ENCODE measurements at regions of chr15 and their contacts with region 1.

Region 1: GRCh38 chr15:96330450-96331145 is at the start of gene NR2F2:
- DNase-seq: peak; percentile 53
- ATAC-seq: peak; percentile 70
- H3K4me3 ChIP-seq: peak within 1 kb of the TSS; percentile 78
- H3K27ac ChIP-seq: no peak within 1 kb of the TSS
- H3K4me1 ChIP-seq: peaks cover 6% of the 10 kb centered on the region; the same call in 1 of the 2 replicates
- H3K27me3 ChIP-seq: peaks cover 0 to 14% of the 10 kb centered on the region in 2 experiments; a peak in 1 of 4 replicates
- CTCF ChIP-seq: no peak
- EP300 ChIP-seq: no peak
- POLR2A ChIP-seq: no peak
- RAD21 ChIP-seq: no peak
- polyA plus RNA-seq, gene NR2F2: 2.3 to 3.2 TPM

Region 2: GRCh38 chr15:95259513-95259912 is 1071.1 kb before region 1 on chr15:
- CTCF ChIA-PET with region 1: interaction called, 34 read pairs
- POLR2A ChIA-PET with region 1: no interaction called
- RAD21 ChIA-PET with region 1: interaction called, 19 read pairs
- SMC1A ChIA-PET with region 1: interaction called, 22 read pairs
- in situ Hi-C with region 1: no loop called
- intact Hi-C with region 1: no loop called
- DNase-seq: peak; percentile 47
- ATAC-seq: peak; percentile 95
- H3K4me3 ChIP-seq: no peak overlapping the region
- H3K27ac ChIP-seq: no peak overlapping the region
- H3K4me1 ChIP-seq: no peaks in the 10 kb centered on the region
- H3K27me3 ChIP-seq: no peaks in the 10 kb centered on the region
- CTCF ChIP-seq: peak; percentile 69 to 81 (median 75)
- EP300 ChIP-seq: no peak
- POLR2A ChIP-seq: no peak
- RAD21 ChIP-seq: peak; percentile 91

Region 3: DNA sequence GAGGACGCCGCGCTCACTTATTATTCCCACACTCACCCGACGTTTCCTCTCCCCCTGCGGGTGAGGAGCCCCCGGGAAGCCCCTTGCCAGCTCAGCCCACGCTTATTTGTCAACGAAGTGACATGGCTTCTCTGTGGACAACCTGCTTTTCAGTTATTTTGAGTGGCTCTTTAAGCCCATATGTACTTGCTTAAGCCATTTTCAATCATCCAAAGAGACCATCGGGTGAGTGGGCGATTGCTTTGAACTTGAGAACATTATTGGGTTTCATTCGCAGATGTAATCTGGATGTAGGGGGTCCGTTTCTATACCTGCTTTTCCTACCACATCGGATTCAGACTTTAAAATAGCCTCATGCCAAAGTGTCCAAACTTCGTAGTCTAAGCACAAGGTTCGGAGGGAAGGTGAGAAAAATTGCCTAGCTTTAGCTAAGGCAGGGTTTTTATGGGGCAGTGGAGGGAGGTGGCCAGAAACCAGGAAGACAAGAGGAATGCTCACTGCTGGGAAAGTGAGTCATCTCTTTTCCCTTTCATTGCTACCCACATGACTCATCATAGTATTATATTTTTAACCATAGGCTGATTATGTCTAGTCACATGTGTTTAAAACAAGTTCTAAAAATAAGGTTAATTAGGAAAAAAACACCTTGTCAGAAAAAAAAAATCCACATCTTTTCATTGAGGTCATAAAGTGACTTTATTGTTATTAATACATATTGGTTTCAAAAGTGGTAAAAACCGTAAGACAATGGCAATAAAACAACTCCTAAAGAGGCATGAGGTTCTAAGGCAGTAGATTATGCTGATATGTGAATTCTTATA is 773.2 kb before region 1 on chr15:
- CTCF ChIA-PET with region 1: no interaction called
- POLR2A ChIA-PET with region 1: no interaction called
- RAD21 ChIA-PET with region 1: no interaction called
- SMC1A ChIA-PET with region 1: no interaction called
- in situ Hi-C with region 1: no loop called
- intact Hi-C with region 1: no loop called
- DNase-seq: peak; percentile 12
- ATAC-seq: peak; percentile 72
- H3K4me3 ChIP-seq: no peak overlapping the region
- H3K27ac ChIP-seq: no peak overlapping the region
- H3K4me1 ChIP-seq: no peaks in the 10 kb centered on the region
- H3K27me3 ChIP-seq: no peaks in the 10 kb centered on the region
- CTCF ChIP-seq: no peak
- EP300 ChIP-seq: peak; percentile 50 to 63; a peak in 3 of 4 replicates
- POLR2A ChIP-seq: no peak
- RAD21 ChIP-seq: no peak

Region 4: GRCh38 chr15:95864467-95864886 is 466.1 kb before region 1 on chr15:
- CTCF ChIA-PET with region 1: no interaction called
- POLR2A ChIA-PET with region 1: no interaction called
- RAD21 ChIA-PET with region 1: interaction called, 6 read pairs
- SMC1A ChIA-PET with region 1: interaction called, 6 read pairs
- in situ Hi-C with region 1: no loop called
- intact Hi-C with region 1: loop called (anchors 5 kb)
- DNase-seq: peak; percentile 73
- ATAC-seq: peak; percentile 95
- H3K4me3 ChIP-seq: no peak overlapping the region
- H3K27ac ChIP-seq: no peak overlapping the region
- H3K4me1 ChIP-seq: peaks cover 6% of the 10 kb centered on the region; the same call in 1 of the 2 replicates
- H3K27me3 ChIP-seq: no peaks in the 10 kb centered on the region
- CTCF ChIP-seq: no peak
- EP300 ChIP-seq: peak; percentile 85 to 96
- POLR2A ChIP-seq: no peak
- RAD21 ChIP-seq: no peak

Region 5: DNA sequence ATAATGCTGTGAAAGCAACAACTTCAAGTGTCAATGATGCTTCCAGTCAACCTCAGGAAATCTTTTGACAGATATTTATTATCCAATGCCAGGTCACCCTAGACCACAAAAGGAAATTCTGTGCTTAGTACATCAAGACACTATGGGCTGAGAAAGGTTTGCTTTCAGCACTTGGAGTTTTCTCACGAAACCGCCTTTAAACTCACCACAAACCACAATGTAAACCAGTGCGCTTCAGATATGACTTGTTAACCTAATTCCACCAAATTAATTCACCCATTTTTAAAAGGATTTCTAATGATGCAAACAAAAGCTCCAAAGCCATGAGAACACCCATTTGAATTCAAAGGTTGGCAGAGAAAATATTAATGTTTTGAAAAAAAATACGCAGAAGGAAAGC is 293.0 kb before region 1 on chr15:
- CTCF ChIA-PET with region 1: interaction called, 12 read pairs
- POLR2A ChIA-PET with region 1: interaction called, 6 read pairs
- RAD21 ChIA-PET with region 1: interaction called, 5 read pairs
- SMC1A ChIA-PET with region 1: interaction called, 8 read pairs
- in situ Hi-C with region 1: no loop called
- intact Hi-C with region 1: loop called (anchors 2 kb)
- DNase-seq: peak; percentile 93
- ATAC-seq: peak; percentile 73
- H3K4me3 ChIP-seq: no peak overlapping the region
- H3K27ac ChIP-seq: peak overlapping the region; percentile 6; the same call in 1 of the 2 replicates
- H3K4me1 ChIP-seq: peaks cover 37% of the 10 kb centered on the region
- H3K27me3 ChIP-seq: no peaks in the 10 kb centered on the region
- CTCF ChIP-seq: no peak
- EP300 ChIP-seq: peak; percentile 89 to 92
- POLR2A ChIP-seq: no peak
- RAD21 ChIP-seq: peak; percentile 10; the same call in 1 of the 2 replicates

Region 6: DNA sequence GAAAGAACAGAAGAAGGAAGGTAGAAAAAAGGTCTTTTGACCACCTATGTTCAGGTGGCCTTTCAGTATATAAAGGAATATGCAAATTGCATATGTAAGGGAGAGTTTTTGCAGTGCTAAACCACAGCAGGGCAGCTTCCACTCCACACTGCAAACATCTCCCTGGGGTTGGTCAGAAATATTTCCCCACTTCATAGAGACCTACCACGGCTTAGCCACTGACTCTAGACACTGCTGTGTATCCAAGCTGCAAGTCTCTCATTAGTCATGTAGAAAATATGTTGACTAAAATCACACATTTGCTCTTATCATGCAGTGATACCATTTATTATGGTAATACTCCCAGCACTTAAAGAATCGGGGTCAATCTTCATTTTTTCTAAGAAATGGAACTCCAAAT is 215.0 kb before region 1 on chr15:
- CTCF ChIA-PET with region 1: no interaction called
- POLR2A ChIA-PET with region 1: no interaction called
- RAD21 ChIA-PET with region 1: no interaction called
- SMC1A ChIA-PET with region 1: no interaction called
- in situ Hi-C with region 1: no loop called
- intact Hi-C with region 1: no loop called
- DNase-seq: no peak
- ATAC-seq: peak; percentile 83
- H3K4me3 ChIP-seq: no peak overlapping the region
- H3K27ac ChIP-seq: no peak overlapping the region
- H3K4me1 ChIP-seq: no peaks in the 10 kb centered on the region
- H3K27me3 ChIP-seq: no peaks in the 10 kb centered on the region
- CTCF ChIP-seq: no peak
- EP300 ChIP-seq: no peak
- POLR2A ChIP-seq: no peak
- RAD21 ChIP-seq: no peak

Region 7: GRCh38 chr15:96234109-96234892 is 96.3 kb before region 1 on chr15:
- CTCF ChIA-PET with region 1: no interaction called
- POLR2A ChIA-PET with region 1: no interaction called
- RAD21 ChIA-PET with region 1: interaction called, 10 read pairs
- SMC1A ChIA-PET with region 1: no interaction called
- in situ Hi-C with region 1: no loop called
- intact Hi-C with region 1: loop called (anchors 5 kb)
- DNase-seq: peak; percentile 58
- ATAC-seq: peak; percentile 92
- H3K4me3 ChIP-seq: no peak overlapping the region
- H3K27ac ChIP-seq: peak overlapping the region; percentile 57
- H3K4me1 ChIP-seq: peaks cover 10% of the 10 kb centered on the region
- H3K27me3 ChIP-seq: no peaks in the 10 kb centered on the region
- CTCF ChIP-seq: no peak
- EP300 ChIP-seq: peak; percentile 64 to 95; a peak in 3 of 4 replicates
- POLR2A ChIP-seq: no peak
- RAD21 ChIP-seq: no peak

Region 8: GRCh38 chr15:96356494-96357455 is 26.2 kb after region 1 on chr15:
- CTCF ChIA-PET with region 1: interaction called, 76 read pairs
- POLR2A ChIA-PET with region 1: interaction called, 7 read pairs
- RAD21 ChIA-PET with region 1: interaction called, 124 read pairs
- SMC1A ChIA-PET with region 1: interaction called, 35 read pairs
- in situ Hi-C with region 1: no loop called
- intact Hi-C with region 1: no loop called
- DNase-seq: peak; percentile 47
- ATAC-seq: peak; percentile 57
- H3K4me3 ChIP-seq: peak overlapping the region; percentile 60; the same call in 1 of the 2 replicates
- H3K27ac ChIP-seq: no peak overlapping the region; the same call in 1 of the 2 replicates
- H3K4me1 ChIP-seq: peaks cover 6% of the 10 kb centered on the region; the same call in 1 of the 2 replicates
- H3K27me3 ChIP-seq: peaks cover 2 to 18% of the 10 kb centered on the region in 2 experiments
- CTCF ChIP-seq: peak; percentile 86 to 95 (median 92)
- EP300 ChIP-seq: peak; percentile 55 to 81; a peak in 3 of 4 replicates
- POLR2A ChIP-seq: no peak
- RAD21 ChIP-seq: peak; percentile 50

Region 9: GRCh38 chr15:96448923-96449322 is 118.3 kb after region 1 on chr15:
- CTCF ChIA-PET with region 1: no interaction called
- POLR2A ChIA-PET with region 1: no interaction called
- RAD21 ChIA-PET with region 1: no interaction called
- SMC1A ChIA-PET with region 1: no interaction called
- in situ Hi-C with region 1: no loop called
- intact Hi-C with region 1: no loop called
- DNase-seq: no peak
- ATAC-seq: no peak
- H3K4me3 ChIP-seq: no peak overlapping the region
- H3K27ac ChIP-seq: no peak overlapping the region
- H3K4me1 ChIP-seq: no peaks in the 10 kb centered on the region
- H3K27me3 ChIP-seq: no peaks in the 10 kb centered on the region
- CTCF ChIP-seq: no peak
- EP300 ChIP-seq: no peak
- POLR2A ChIP-seq: no peak
- RAD21 ChIP-seq: no peak

Region 10: DNA sequence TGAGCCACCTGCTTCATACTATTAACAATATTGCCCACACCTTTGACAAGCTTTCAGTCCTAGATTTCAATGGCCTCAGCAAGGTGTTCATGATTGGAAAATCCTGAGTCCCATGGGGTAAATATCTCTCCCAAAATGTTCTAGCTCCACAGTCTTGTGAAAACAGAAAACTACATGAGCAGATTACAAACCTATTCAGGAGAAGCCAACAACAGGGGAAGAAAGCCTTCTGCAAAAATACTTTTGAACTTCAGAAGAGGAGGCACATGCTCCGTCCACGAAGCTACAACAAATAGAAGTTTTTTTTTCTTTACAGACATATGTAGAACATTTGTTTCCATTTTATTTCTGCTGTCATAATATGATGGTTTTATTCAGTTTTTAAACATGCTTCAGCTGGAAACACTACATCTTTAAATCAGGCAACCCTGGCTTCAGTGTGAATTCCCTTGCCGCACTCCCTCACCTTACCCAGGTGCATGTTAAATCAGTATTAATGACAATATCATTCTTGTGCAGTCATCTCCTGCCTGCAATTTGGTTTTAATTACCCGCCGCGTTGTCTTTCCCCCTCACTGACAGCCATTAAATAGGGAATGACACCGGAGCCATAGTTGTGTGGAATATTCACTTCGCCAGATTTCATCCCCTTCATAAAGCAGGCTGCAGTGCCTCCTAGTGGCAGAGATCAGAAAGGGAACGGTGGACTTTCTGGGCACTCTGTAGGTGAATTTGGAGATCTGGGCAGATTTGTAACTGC is 904.4 kb after region 1 on chr15:
- CTCF ChIA-PET with region 1: interaction called, 27 read pairs
- POLR2A ChIA-PET with region 1: interaction called, 3 read pairs
- RAD21 ChIA-PET with region 1: interaction called, 40 read pairs
- SMC1A ChIA-PET with region 1: interaction called, 25 read pairs
- in situ Hi-C with region 1: loop called (anchors 10 kb)
- intact Hi-C with region 1: loop called (anchors 5 kb)
- DNase-seq: no peak
- ATAC-seq: peak; percentile 79
- H3K4me3 ChIP-seq: no peak overlapping the region
- H3K27ac ChIP-seq: no peak overlapping the region
- H3K4me1 ChIP-seq: no peaks in the 10 kb centered on the region
- H3K27me3 ChIP-seq: no peaks in the 10 kb centered on the region
- CTCF ChIP-seq: peak; percentile 66 to 74 (median 73)
- EP300 ChIP-seq: no peak
- POLR2A ChIP-seq: no peak
- RAD21 ChIP-seq: peak; percentile 84